ENCODE measurements at regions of chr10 and their contacts with region 1.

Region 1: DNA sequence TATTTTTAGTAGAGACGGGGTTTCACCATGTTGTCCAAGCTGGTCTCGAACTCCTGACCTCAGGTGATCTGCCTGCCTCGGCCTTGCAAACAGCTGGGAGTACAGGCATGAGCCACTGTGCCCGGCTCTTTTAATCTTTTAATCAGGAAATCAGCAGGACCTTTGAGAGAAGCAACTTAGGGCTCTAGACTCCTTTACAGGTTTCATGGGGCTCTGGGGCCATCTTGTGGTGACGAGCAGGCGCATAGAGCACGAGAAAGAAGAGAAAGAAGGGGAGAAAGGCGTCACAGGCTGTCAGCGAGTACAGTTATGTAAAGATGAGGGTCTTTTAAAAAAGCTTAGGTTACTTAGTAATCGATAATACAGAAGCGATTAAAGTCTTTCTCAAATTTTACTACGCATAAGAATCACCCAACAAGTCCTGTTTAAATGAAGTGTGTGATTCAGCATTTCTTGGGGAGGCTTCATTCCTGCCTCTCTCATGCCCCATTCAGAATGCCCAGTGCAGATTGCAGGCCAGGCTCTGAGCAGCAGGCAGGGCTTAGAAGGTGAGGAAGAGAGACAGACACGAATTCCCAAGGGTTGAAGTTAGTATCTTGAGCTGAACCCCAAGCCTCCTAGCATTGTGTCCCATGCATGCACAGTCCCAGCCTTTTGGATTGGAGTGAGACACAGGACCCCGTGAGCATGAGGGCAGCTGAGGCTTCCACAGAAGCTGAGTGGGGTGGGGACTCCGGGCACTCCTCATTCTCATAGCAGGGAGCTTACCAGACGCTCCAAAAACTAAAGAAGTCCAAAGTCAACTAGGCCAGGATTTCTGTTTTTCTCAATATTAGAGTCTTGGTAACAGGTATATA is 23.6 kb upstream of the PFKP start:
- DNase-seq: peak in 1 of 2 experiments; percentile 49
- H3K4me3 ChIP-seq: no peak overlapping the region
- H3K27ac ChIP-seq: no peak overlapping the region
- H3K4me1 ChIP-seq: peaks cover 0 to 21% (median 11%) of the 10 kb centered on the region in 4 experiments; a peak in 5 of 7 replicates
- H3K27me3 ChIP-seq: no peaks in the 10 kb centered on the region
- CTCF ChIP-seq: peak; percentile 60 to 79 (median 77)
- EP300 ChIP-seq: no peak
- POLR2A ChIP-seq: no peak
- RAD21 ChIP-seq: peak; percentile 94 to 96

Region 2: GRCh38 chr10:2885288-2886278 is 158.2 kb before region 1 on chr10:
- CTCF ChIA-PET with region 1: interaction called, 17 read pairs
- POLR2A ChIA-PET with region 1: no interaction called
- DNase-seq: no peak
- H3K4me3 ChIP-seq: no peak overlapping the region
- H3K27ac ChIP-seq: no peak overlapping the region
- H3K4me1 ChIP-seq: no peaks in the 10 kb centered on the region
- H3K27me3 ChIP-seq: no peaks in the 10 kb centered on the region
- CTCF ChIP-seq: no peak
- EP300 ChIP-seq: no peak
- POLR2A ChIP-seq: no peak
- RAD21 ChIP-seq: no peak

Region 3: DNA sequence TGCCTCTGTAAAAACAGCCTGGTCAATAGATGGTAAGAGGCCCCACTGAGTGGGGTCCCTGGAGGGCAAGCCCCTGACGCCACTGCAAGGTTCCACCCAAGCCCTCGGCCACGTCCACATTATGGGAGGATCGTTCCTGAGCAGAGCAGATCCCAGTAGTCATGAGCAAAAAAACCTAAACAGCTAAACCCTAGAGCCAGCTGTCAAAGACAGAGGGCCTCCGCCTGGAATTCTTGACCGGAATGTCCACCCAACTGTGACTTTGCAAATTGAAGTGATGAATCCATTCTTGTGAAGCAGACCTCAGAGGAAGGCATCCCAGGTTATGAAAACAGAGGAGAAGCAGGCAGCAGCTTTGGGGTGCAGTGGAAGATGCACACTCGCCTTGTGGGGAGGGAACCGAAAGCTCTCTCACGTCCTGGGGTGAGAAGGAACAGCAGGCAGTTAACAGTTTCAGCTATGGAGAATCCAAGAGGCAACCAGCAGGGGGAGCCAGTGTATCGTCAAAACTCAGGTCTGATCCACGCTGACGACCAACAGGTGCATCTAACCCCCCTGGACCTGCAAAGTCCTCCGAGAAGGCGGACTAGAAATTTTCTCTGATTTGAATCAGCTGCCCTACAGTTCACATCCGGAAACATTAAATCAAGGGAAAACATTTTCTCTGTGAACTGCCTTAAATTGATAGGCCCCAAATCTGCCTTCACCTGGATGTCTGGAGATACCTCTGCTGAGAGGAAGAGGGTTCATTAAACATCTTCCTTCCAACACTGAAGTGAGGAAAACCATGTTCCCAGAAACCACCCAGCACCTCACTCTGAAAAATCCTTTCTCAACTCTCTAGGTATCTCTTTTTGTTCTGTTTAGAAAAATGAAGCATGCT is 115.5 kb before region 1 on chr10:
- CTCF ChIA-PET with region 1: interaction called, 94 read pairs
- POLR2A ChIA-PET with region 1: no interaction called
- DNase-seq: peak; percentile 58 to 95
- H3K4me3 ChIP-seq: no peak overlapping the region
- H3K27ac ChIP-seq: no peak overlapping the region
- H3K4me1 ChIP-seq: peaks cover 0 to 11% (median 5%) of the 10 kb centered on the region in 4 experiments; a peak in 6 of 7 replicates
- H3K27me3 ChIP-seq: peaks cover 0 to 2% (median 0%) of the 10 kb centered on the region in 4 experiments; a peak in 2 of 7 replicates
- CTCF ChIP-seq: peak; percentile 76 to 93 (median 92)
- EP300 ChIP-seq: no peak
- POLR2A ChIP-seq: no peak
- RAD21 ChIP-seq: peak; percentile 97 to 98

Region 4: GRCh38 chr10:2968401-2969058 is 75.2 kb before region 1 on chr10:
- CTCF ChIA-PET with region 1: interaction called, 10 read pairs
- POLR2A ChIA-PET with region 1: no interaction called
- DNase-seq: no peak
- H3K4me3 ChIP-seq: no peak overlapping the region
- H3K27ac ChIP-seq: no peak overlapping the region
- H3K4me1 ChIP-seq: peaks cover 4 to 10% (median 5%) of the 10 kb centered on the region in 4 experiments
- H3K27me3 ChIP-seq: no peaks in the 10 kb centered on the region
- CTCF ChIP-seq: no peak
- EP300 ChIP-seq: no peak
- POLR2A ChIP-seq: no peak
- RAD21 ChIP-seq: no peak

Region 5: DNA sequence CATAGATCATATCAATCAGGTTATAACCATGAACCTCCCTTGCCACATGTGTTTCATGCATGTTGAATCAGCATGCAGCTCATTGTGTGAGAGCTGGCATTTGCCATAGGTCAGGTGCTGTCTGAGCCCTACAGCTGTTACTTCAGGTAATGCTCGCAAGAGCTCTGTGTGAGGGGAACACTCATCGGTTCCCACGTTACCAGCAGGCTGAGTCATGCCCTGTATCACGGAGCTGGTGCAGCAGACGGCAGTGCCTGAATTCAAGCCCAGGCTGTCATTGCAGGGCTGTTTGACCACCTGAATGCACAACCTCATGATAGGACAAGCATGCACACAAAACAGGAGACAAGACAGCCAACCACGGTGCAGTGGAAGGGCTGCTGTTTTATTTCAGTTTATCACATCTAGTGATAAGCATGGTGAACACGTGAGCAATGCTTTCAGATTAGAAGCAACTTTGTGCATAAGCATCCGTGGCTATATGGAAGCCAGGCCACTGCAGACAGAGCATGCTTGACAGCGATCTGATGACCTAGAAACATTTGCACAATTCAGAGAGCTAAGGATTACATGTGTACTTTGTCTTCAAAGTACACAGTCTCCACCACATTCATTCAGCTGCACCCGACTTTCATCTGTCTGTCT is 32.8 kb before region 1 on chr10:
- CTCF ChIA-PET with region 1: interaction called, 10 read pairs
- POLR2A ChIA-PET with region 1: no interaction called
- DNase-seq: no peak
- H3K4me3 ChIP-seq: no peak overlapping the region
- H3K27ac ChIP-seq: no peak overlapping the region
- H3K4me1 ChIP-seq: 0 out of 7 replicates have a peak, but pooled peaks cover 0 to 2% (median 0%) of the 10 kb centered on the region in 4 experiments
- H3K27me3 ChIP-seq: no peaks in the 10 kb centered on the region; a peak in 3 of 7 replicates
- CTCF ChIP-seq: no peak
- EP300 ChIP-seq: no peak
- POLR2A ChIP-seq: no peak
- RAD21 ChIP-seq: no peak

Region 6: GRCh38 chr10:3054183-3054850 is 10.6 kb after region 1 on chr10:
- CTCF ChIA-PET with region 1: interaction called, 23 read pairs
- POLR2A ChIA-PET with region 1: no interaction called
- DNase-seq: no peak
- H3K4me3 ChIP-seq: no peak overlapping the region
- H3K27ac ChIP-seq: no peak overlapping the region
- H3K4me1 ChIP-seq: peaks cover 0 to 3% (median 0%) of the 10 kb centered on the region in 4 experiments; a peak in 2 of 7 replicates
- H3K27me3 ChIP-seq: peaks cover 0 to 2% (median 0%) of the 10 kb centered on the region in 4 experiments; a peak in 1 of 7 replicates
- CTCF ChIP-seq: no peak
- EP300 ChIP-seq: no peak
- POLR2A ChIP-seq: no peak
- RAD21 ChIP-seq: no peak

Region 7: GRCh38 chr10:3115685-3116084 is 71.9 kb after region 1 on chr10:
- CTCF ChIA-PET with region 1: no interaction called
- POLR2A ChIA-PET with region 1: no interaction called
- DNase-seq: no peak
- H3K4me3 ChIP-seq: no peak overlapping the region
- H3K27ac ChIP-seq: no peak overlapping the region
- H3K4me1 ChIP-seq: no peaks in the 10 kb centered on the region
- H3K27me3 ChIP-seq: no peaks in the 10 kb centered on the region
- CTCF ChIP-seq: no peak
- EP300 ChIP-seq: no peak
- POLR2A ChIP-seq: no peak
- RAD21 ChIP-seq: no peak